PC-3 (cell line): ENCODE measurements at regions of chr11 and their contacts with region 1.

Region 1: DNA sequence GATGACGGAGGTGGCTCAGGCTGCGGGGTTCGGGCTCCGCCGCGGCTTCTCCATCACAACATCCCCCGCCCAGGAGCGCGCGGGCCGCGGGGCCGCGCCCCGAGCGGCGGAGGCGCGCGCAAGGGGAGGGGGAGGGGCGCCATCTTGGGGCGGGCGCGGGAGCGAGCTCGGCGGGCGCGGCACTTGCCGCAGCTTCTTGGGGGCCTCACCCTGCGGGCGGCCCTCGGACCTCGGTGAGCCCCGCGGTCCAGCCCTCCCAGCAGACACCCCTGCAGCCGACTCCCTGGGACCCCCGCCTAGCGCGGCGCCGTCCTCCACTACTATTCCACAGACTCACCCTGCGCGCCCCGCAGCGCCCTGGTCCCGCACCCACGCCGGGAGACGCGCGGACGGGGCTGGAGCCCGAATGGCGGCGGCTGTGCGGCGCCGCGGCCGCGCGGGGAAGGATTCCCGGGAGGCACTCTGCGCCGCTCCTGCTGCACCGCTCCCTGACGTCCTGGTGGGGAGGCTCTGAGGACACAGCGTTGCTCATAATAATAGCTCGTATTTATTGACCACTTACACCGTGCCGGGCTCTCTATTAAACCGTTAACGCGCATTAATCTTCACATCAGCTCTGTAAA is at the start of gene APBB1:
- DNase-seq: peak; percentile 63
- ATAC-seq: peak; percentile 83
- H3K4me3 ChIP-seq: peak within 1 kb of the TSS; percentile 90
- H3K27ac ChIP-seq: no peak within 1 kb of the TSS
- H3K4me1 ChIP-seq: peaks cover 4% of the 10 kb centered on the region; the same call in 1 of the 2 replicates
- H3K27me3 ChIP-seq: no peaks in the 10 kb centered on the region
- CTCF ChIP-seq: 0 out of 2 replicates have a peak, but pooled peaks have one; percentile 9
- total RNA-seq, gene APBB1: 17.5 and 24.7 TPM in 2 replicates

Region 2: GRCh38 chr11:6473481-6474422 is 54.6 kb after region 1 on chr11 and contains the start of gene TRIM3:
- CTCF ChIA-PET with region 1: interaction called, 3 read pairs
- POLR2A ChIA-PET with region 1: interaction called, 20 read pairs
- intact Hi-C with region 1: no loop called
- DNase-seq: peak; percentile 82
- ATAC-seq: peak; percentile 73
- H3K4me3 ChIP-seq: peak within 1 kb of the TSS; percentile 95
- H3K27ac ChIP-seq: peak within 1 kb of the TSS; percentile 84
- H3K4me1 ChIP-seq: peaks cover 28% of the 10 kb centered on the region
- H3K27me3 ChIP-seq: no peaks in the 10 kb centered on the region
- CTCF ChIP-seq: peak; percentile 49; the same call in 1 of the 2 replicates
- total RNA-seq, gene TRIM3: 20.3 and 24.7 TPM in 2 replicates